ENCODE measurements at regions of chr11 and their contacts with region 1.

Region 1: DNA sequence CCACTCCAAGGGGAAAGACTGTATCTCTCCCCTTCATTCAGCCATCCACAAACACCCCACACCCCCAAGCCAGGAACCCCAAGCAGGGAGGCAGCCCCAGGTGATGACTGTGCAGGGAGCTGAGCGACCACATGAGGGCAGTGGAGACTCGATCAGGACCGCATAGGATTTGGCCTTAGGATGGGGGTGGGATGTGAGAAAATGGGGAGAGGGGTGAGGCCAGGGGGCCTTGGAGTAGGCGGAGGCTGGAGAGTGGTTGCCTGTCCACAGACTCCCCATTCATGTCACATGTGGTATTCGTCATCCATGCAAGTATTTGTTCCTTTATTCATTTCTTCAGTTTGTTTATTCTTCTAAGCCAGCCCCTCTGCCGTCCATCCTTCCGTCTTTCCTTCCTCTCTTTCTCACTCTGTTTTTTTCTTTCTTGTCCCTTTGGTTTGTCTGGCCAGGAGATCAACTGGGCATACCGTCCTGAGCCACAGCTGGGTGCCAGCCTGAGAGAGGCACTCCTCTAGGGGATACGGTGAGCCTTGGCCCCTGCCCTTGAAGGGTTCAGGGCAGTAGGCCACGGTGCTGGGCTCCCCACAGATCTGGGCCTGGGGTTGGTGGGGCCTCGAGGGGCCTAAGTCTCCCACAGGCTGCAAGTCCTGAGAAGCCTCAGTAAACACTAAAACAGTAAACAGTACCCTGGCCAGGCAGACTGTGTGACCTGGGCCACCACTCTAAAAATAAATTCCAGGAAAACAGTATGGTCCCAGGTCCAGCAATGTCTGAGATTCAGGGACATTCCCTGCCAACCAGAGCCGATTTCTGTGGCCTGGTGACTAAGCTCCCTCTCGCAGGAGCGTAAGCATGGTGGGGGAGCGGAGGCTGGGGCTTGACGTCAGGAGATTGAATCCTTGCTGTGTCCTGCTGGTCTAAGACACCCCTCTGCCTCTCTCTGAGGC is 2.5 kb upstream of the RHOD start:
- H3K4me3 ChIP-seq: no peak overlapping the region
- H3K27ac ChIP-seq: no peak overlapping the region
- H3K4me1 ChIP-seq: peaks cover 9% of the 10 kb centered on the region
- CTCF ChIP-seq: peak; percentile 48; the same call in 1 of the 2 replicates

Region 2: GRCh38 chr11:67027483-67028196 is 26.5 kb before region 1 on chr11:
- CTCF ChIA-PET with region 1: interaction called, 10 read pairs
- POLR2A ChIA-PET with region 1: interaction called, 7 read pairs
- H3K4me3 ChIP-seq: no peak overlapping the region
- H3K27ac ChIP-seq: no peak overlapping the region
- H3K4me1 ChIP-seq: peaks cover 2% of the 10 kb centered on the region; the same call in 1 of the 2 replicates
- CTCF ChIP-seq: no peak

Region 3: GRCh38 chr11:67066333-67066965 is 12.3 kb after region 1 on chr11:
- CTCF ChIA-PET with region 1: interaction called, 23 read pairs
- POLR2A ChIA-PET with region 1: interaction called, 5 read pairs
- H3K4me3 ChIP-seq: no peak overlapping the region
- H3K27ac ChIP-seq: no peak overlapping the region
- H3K4me1 ChIP-seq: no peaks in the 10 kb centered on the region
- CTCF ChIP-seq: no peak

Region 4: DNA sequence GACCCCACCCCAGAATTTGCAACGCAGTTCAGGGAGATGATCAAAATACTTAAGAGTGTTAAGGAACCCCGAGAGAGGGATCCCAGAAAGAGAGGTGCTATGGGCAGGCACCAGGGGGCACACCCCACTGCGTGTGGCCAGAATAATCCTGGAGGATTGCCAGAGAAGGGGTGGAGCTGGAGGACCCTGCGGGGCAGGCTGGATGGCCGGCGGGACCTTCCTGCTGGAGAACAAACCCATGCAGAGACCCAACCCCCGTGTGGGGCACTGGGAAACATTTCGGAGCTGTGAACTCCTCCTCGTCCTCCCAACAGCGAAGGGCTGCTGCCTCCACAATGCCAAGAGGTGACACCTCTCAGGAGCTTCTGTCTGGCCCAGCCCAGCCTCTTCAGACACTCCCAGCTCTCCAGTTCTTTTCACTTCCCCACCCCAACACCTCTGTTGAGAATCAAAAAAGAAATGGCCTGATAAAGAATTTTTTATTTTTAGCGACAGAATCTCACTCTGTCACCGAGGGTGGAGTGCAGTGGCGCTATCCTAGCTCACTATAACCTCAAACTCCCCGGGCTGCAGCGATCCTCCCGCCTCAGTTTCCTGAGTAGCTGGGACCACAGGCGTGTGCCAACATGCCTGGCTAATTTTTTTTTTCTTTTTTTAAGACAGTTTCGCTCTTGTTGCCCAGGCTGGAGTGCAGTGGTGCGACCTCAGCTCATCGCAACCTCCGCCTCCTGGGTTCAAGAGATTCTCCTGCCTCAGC is 28.0 kb after region 1 on chr11:
- CTCF ChIA-PET with region 1: interaction called, 16 read pairs
- POLR2A ChIA-PET with region 1: interaction called, 3 read pairs
- H3K4me3 ChIP-seq: no peak overlapping the region
- H3K27ac ChIP-seq: no peak overlapping the region
- H3K4me1 ChIP-seq: no peaks in the 10 kb centered on the region
- CTCF ChIP-seq: no peak

Region 5: GRCh38 chr11:67382276-67383136 is 328.3 kb after region 1 on chr11:
- CTCF ChIA-PET with region 1: interaction called, 11 read pairs
- POLR2A ChIA-PET with region 1: no interaction called
- H3K4me3 ChIP-seq: no peak overlapping the region
- H3K27ac ChIP-seq: no peak overlapping the region
- H3K4me1 ChIP-seq: no peaks in the 10 kb centered on the region
- CTCF ChIP-seq: peak; percentile 92